ENCODE measurements at regions of chr13 and their contacts with region 1.

Region 1: GRCh38 chr13:50130123-50130946 is 115.1 kb downstream of the KCNRG start:
- DNase-seq: peak; percentile 81 to 88
- ATAC-seq: peak; percentile 34 to 64 (median 47)
- H3K4me3 ChIP-seq: peak overlapping the region; percentile 77
- H3K27ac ChIP-seq: peak overlapping the region; percentile 71
- H3K4me1 ChIP-seq: peaks cover 14% of the 10 kb centered on the region
- H3K27me3 ChIP-seq: peaks cover 0 to 7% (median 6%) of the 10 kb centered on the region in 3 donors
- CTCF ChIP-seq: no peak

Region 2: GRCh38 chr13:50376895-50377575 is 246.7 kb after region 1 on chr13:
- intact Hi-C with region 1: loop called in 1 of 2 experiments (anchors 5 kb)
- DNase-seq: peak in 1 of 2 donors; percentile 58
- ATAC-seq: peak; percentile 21 to 88 (median 85)
- H3K4me3 ChIP-seq: no peak overlapping the region
- H3K27ac ChIP-seq: peak overlapping the region; percentile 39
- H3K4me1 ChIP-seq: peaks cover 23% of the 10 kb centered on the region
- H3K27me3 ChIP-seq: no peaks in the 10 kb centered on the region
- CTCF ChIP-seq: peak; percentile 32

Measured in psoas muscle (tissue), 8 donors.